IMR-90 (cell line): ENCODE measurements at regions of chr5 and their contacts with region 1.

Region 1: GRCh38 chr5:150758531-150759333 is at the start of gene DCTN4:
- DNase-seq: peak; percentile 99
- ATAC-seq: peak; percentile 95
- H3K4me3 ChIP-seq: peak within 1 kb of the TSS; percentile 70
- H3K27ac ChIP-seq: peak within 1 kb of the TSS; percentile 95
- H3K4me1 ChIP-seq: peaks cover 10% of the 10 kb centered on the region
- H3K27me3 ChIP-seq: no peaks in the 10 kb centered on the region
- CTCF ChIP-seq: no peak; the same call in 1 of the 2 replicates
- POLR2A ChIP-seq: peak; percentile 88
- RAD21 ChIP-seq: no peak
- total RNA-seq, gene DCTN4: 50.2 and 56.1 TPM in 2 replicates

Region 2: GRCh38 chr5:150778517-150779396 is 20.0 kb after region 1 on chr5 and contains the start of gene SMIM3:
- CTCF ChIA-PET with region 1: interaction called, 3 read pairs
- POLR2A ChIA-PET with region 1: interaction called, 12 read pairs
- dilution Hi-C with region 1: no loop called
- in situ Hi-C with region 1: no loop called
- intact Hi-C with region 1: loop called (anchors 2 kb)
- DNase-seq: peak; percentile 63
- ATAC-seq: peak; percentile 79
- H3K4me3 ChIP-seq: peak within 1 kb of the TSS; percentile 79
- H3K27ac ChIP-seq: peak within 1 kb of the TSS; percentile 88
- H3K4me1 ChIP-seq: peaks cover 27% of the 10 kb centered on the region
- H3K27me3 ChIP-seq: no peaks in the 10 kb centered on the region
- CTCF ChIP-seq: peak; percentile 48
- POLR2A ChIP-seq: peak; percentile 45; the same call in 1 of the 2 replicates
- RAD21 ChIP-seq: peak; percentile 62
- total RNA-seq, gene SMIM3: 36.1 and 37.5 TPM in 2 replicates

Region 3: DNA sequence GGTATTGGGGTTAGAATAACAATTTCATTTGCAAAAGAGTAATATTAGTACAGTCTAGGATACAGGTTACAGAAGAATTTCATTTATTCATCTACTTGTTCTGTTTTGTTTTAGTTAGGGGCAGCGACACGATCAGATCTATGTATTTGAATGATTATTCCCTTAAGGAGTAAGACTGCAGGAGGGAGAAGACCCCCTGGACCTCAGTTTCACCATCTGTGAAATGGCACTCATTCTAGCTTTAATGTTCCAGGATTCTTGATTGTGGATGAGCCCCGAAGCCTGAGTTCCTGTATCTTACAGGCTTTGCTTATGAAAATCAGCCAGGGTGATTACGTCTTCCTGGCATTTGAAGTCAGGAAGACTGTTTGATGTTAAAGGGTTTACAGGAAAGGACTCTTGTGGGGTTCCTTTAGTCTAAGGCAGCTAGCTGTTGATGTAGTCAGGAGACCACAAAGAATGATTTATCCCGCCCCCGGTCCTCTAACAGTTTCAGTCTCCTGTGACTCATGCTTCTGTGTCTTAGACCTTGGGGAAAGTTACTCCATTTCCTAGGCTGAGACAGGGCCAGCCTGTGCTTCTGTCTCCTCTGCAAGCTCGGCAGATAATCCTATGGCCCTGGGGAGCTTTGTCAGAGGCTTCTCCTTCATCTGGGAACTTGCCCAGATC is 31.3 kb after region 1 on chr5:
- CTCF ChIA-PET with region 1: interaction called, 3 read pairs
- POLR2A ChIA-PET with region 1: interaction called, 5 read pairs
- dilution Hi-C with region 1: no loop called
- in situ Hi-C with region 1: no loop called
- intact Hi-C with region 1: loop called (anchors 5 kb)
- DNase-seq: peak; percentile 99
- ATAC-seq: peak; percentile 95
- H3K4me3 ChIP-seq: no peak overlapping the region; the same call in 1 of the 2 replicates
- H3K27ac ChIP-seq: peak overlapping the region; percentile 94
- H3K4me1 ChIP-seq: peaks cover 15% of the 10 kb centered on the region
- H3K27me3 ChIP-seq: no peaks in the 10 kb centered on the region
- CTCF ChIP-seq: no peak
- POLR2A ChIP-seq: peak; percentile 56; the same call in 1 of the 2 replicates
- RAD21 ChIP-seq: no peak